ENCODE measurements at regions of chr18 and their contacts with region 1.

Region 1: GRCh38 chr18:35376742-35377695 is at the start of gene ZNF396:
- DNase-seq: peak; percentile 15 to 79 (median 57)
- ATAC-seq: peak; percentile 72 to 82 (median 80)
- H3K4me3 ChIP-seq: peak within 1 kb of the TSS; percentile 74 to 81
- H3K4me3 Mint-ChIP-seq: peak within 1 kb of the TSS; percentile 81 to 86 (median 86)
- H3K27ac ChIP-seq: no peak within 1 kb of the TSS
- H3K27ac Mint-ChIP-seq: peak within 1 kb of the TSS in 1 of 2 donors; percentile 69
- H3K4me1 ChIP-seq: peaks cover 0 to 12% of the 10 kb centered on the region in 2 experiments
- H3K4me1 Mint-ChIP-seq: peaks cover 7 to 12% (median 9%) of the 10 kb centered on the region in 3 donors
- H3K27me3 ChIP-seq: peaks cover 0 to 4% of the 10 kb centered on the region in 2 experiments
- H3K27me3 Mint-ChIP-seq: no peaks in the 10 kb centered on the region
- total RNA-seq, gene ZNF396: 0.73 to 2.4 (median 1.4) TPM in 4 of 5 donors, not detected in the other

Region 2: GRCh38 chr18:35267161-35267651 is 109.8 kb before region 1 on chr18:
- CTCF ChIA-PET with region 1: interaction called in 1 of 2 experiments, 14 read pairs
- POLR2A ChIA-PET with region 1: no interaction called
- DNase-seq: peak; percentile 15 to 80 (median 56)
- ATAC-seq: peak; percentile 83 to 90 (median 87)
- H3K4me3 ChIP-seq: peak overlapping the region; percentile 66 to 76
- H3K4me3 Mint-ChIP-seq: peak overlapping the region; percentile 90 to 99 (median 93)
- H3K27ac ChIP-seq: peak overlapping the region; percentile 84
- H3K27ac Mint-ChIP-seq: peak overlapping the region; percentile 95
- H3K4me1 ChIP-seq: peaks cover 0 to 16% of the 10 kb centered on the region in 2 experiments
- H3K4me1 Mint-ChIP-seq: peaks cover 21 to 29% (median 26%) of the 10 kb centered on the region in 3 donors
- H3K27me3 ChIP-seq: no peaks in the 10 kb centered on the region
- H3K27me3 Mint-ChIP-seq: no peaks in the 10 kb centered on the region

Region 3: DNA sequence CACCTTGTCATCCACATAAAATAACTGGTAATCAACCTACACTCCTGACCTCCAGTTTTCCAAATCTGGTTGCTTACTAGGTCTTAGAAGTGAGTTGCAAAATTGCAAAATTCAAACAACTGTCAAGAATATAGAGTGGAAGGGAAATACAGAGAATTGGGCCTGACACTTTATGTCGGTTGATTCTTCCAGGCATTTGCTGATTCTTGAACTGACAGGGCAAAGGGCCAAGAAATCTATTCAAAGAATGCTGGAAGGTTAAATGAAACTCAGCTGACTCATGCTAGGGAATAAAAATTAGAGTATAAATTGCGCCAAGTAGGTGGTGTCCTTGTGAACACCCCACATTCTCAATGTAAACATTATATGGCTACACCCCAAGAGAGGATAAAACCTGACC is 65.5 kb before region 1 on chr18:
- CTCF ChIA-PET with region 1: no interaction called
- POLR2A ChIA-PET with region 1: no interaction called
- DNase-seq: no peak
- ATAC-seq: no peak
- H3K4me3 ChIP-seq: no peak overlapping the region
- H3K4me3 Mint-ChIP-seq: no peak overlapping the region
- H3K27ac ChIP-seq: no peak overlapping the region
- H3K27ac Mint-ChIP-seq: no peak overlapping the region
- H3K4me1 ChIP-seq: no peaks in the 10 kb centered on the region
- H3K4me1 Mint-ChIP-seq: no peaks in the 10 kb centered on the region
- H3K27me3 ChIP-seq: no peaks in the 10 kb centered on the region
- H3K27me3 Mint-ChIP-seq: no peaks in the 10 kb centered on the region